ENCODE measurements at regions of chr10 and their contacts with region 1.

Region 1: DNA sequence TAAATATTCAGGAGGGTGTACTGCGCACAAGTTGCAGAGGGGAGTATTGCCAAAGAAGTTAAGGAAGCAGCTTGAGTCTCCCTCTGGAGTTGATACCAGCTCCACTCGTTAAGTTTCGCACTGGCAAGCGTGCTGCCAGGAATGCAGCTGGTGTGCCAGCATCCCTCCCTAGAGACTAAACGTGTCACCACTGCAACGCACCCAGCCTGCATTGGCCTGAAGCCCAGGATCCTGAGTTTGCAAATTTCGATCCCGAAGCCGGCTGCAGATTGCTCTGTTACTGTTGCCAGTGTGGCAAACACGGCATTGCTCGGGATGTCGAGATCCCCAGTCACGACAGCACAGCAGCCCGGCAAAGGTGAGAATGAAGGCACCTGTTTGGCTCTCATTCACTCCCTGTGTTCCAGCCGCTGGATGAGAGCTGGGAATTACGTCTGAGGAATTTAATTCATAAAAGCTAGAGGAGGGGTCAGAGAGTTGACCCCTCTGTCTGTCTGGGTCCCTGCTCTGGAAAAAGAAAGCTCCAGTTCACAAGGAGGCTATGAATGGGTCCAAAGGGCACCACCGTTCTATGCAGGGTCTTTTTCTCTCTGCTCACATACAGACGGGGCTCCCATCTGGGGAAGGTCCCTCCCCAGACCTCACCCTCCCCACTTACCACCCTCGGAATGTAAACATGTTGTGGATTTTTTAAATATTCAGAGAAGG is 61.0 kb downstream of the NRP1 start:
- DNase-seq: peak; percentile 61 to 87
- ATAC-seq: peak; percentile 89 to 91
- H3K4me3 ChIP-seq: peak overlapping the region; percentile 35 to 55 (median 50)
- H3K27ac ChIP-seq: peak overlapping the region; percentile 74 to 79 (median 76)
- H3K4me1 ChIP-seq: peaks cover 36 to 43% of the 10 kb centered on the region in 2 donors
- H3K27me3 ChIP-seq: no peaks in the 10 kb centered on the region
- CTCF ChIP-seq: no peak
- POLR2A ChIP-seq: no peak

Region 2: DNA sequence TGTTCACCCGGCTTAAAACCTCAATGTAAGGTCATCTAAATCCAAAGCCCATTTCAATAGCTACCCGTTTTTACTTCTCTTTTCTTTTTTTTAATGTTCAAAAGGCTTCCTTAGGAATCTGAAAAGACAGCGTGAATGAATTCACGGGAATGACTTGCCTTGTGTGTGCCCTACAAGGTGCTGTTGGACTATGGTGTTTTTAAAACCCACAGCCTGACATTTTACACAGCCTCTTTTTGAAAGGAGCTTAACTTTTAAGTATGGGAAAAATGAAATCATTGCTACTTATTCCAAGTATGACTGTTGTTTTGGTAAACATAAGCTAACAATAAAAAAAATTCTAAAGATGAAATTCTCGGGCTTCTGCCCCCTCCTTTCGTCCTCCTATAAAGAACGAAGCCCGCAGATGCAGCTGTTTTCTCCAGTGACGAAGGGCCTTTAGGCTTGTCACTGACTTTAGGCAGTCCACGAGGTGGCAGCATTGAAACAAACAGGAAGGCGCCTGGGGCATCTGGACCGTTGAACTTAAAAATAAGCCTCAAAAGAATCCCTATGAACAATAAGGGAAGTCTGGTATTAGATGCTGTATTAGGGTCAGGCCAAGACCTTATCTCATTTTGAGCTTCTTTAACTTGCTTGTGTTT is 80.3 kb before region 1 on chr10:
- in situ Hi-C with region 1: no loop called
- intact Hi-C with region 1: loop called (anchors 2 kb)
- DNase-seq: peak; percentile 64 to 72
- ATAC-seq: peak; percentile 79 to 91
- H3K4me3 ChIP-seq: no peak overlapping the region
- H3K27ac ChIP-seq: peak overlapping the region; percentile 12 to 51 (median 40)
- H3K4me1 ChIP-seq: peaks cover 0 to 31% of the 10 kb centered on the region in 2 donors
- H3K27me3 ChIP-seq: no peaks in the 10 kb centered on the region
- CTCF ChIP-seq: peak; percentile 49 to 84 (median 73)
- POLR2A ChIP-seq: no peak

Region 3: GRCh38 chr10:33321513-33321912 is 48.1 kb after region 1 on chr10:
- in situ Hi-C with region 1: no loop called
- intact Hi-C with region 1: no loop called
- DNase-seq: no peak
- ATAC-seq: peak; percentile 37 to 46
- H3K4me3 ChIP-seq: no peak overlapping the region
- H3K27ac ChIP-seq: peak overlapping the region; percentile 54 to 69 (median 64)
- H3K4me1 ChIP-seq: peaks cover 68 to 71% of the 10 kb centered on the region in 2 donors
- H3K27me3 ChIP-seq: no peaks in the 10 kb centered on the region
- CTCF ChIP-seq: no peak
- POLR2A ChIP-seq: no peak